CD4-positive, alpha-beta T cell (primary cell): ENCODE measurements at regions of chr2 and their contacts with region 1.

Region 1: GRCh38 chr2:58046585-58047372 is at the start of gene VRK2:
- DNase-seq: peak; percentile 68 to 93 (median 77)
- ATAC-seq: peak; percentile 91
- H3K4me3 ChIP-seq: peak within 1 kb of the TSS; percentile 75
- H3K4me3 Mint-ChIP-seq: peak within 1 kb of the TSS; percentile 91
- H3K27ac ChIP-seq: peak within 1 kb of the TSS; percentile 86 to 88
- H3K27ac Mint-ChIP-seq: peak within 1 kb of the TSS; percentile 96
- H3K4me1 ChIP-seq: peaks cover 18% of the 10 kb centered on the region
- H3K4me1 Mint-ChIP-seq: peaks cover 55% of the 10 kb centered on the region
- H3K27me3 ChIP-seq: no peaks in the 10 kb centered on the region
- H3K27me3 Mint-ChIP-seq: no peaks in the 10 kb centered on the region
- CTCF ChIP-seq: no peak
- total RNA-seq, gene VRK2: 11.1 to 11.5 TPM

Region 2: GRCh38 chr2:58063641-58064040 is 16.9 kb after region 1 on chr2:
- CTCF ChIA-PET with region 1: interaction called, 7 read pairs
- POLR2A ChIA-PET with region 1: interaction called, 5 read pairs
- intact Hi-C with region 1: loop called in 1 of 2 experiments (anchors 2 kb)
- DNase-seq: no peak
- ATAC-seq: no peak
- H3K4me3 ChIP-seq: no peak overlapping the region
- H3K4me3 Mint-ChIP-seq: peak overlapping the region; percentile 14
- H3K27ac ChIP-seq: no peak overlapping the region
- H3K27ac Mint-ChIP-seq: no peak overlapping the region
- H3K4me1 ChIP-seq: no peaks in the 10 kb centered on the region
- H3K4me1 Mint-ChIP-seq: peaks cover 48% of the 10 kb centered on the region
- H3K27me3 ChIP-seq: no peaks in the 10 kb centered on the region
- H3K27me3 Mint-ChIP-seq: no peaks in the 10 kb centered on the region
- CTCF ChIP-seq: no peak

Region 3: GRCh38 chr2:58240670-58241545 is 194.1 kb after region 1 on chr2 and contains the start of gene FANCL:
- CTCF ChIA-PET with region 1: no interaction called
- POLR2A ChIA-PET with region 1: interaction called, 3 read pairs
- intact Hi-C with region 1: loop called in 1 of 2 experiments (anchors 5 kb)
- DNase-seq: peak; percentile 15 to 77 (median 46)
- ATAC-seq: peak; percentile 83
- H3K4me3 ChIP-seq: peak within 1 kb of the TSS; percentile 92
- H3K4me3 Mint-ChIP-seq: peak within 1 kb of the TSS; percentile 94
- H3K27ac ChIP-seq: peak within 1 kb of the TSS in 1 of 2 donors; percentile 42
- H3K27ac Mint-ChIP-seq: peak within 1 kb of the TSS; percentile 70
- H3K4me1 ChIP-seq: peaks cover 4% of the 10 kb centered on the region
- H3K4me1 Mint-ChIP-seq: peaks cover 39% of the 10 kb centered on the region
- H3K27me3 ChIP-seq: no peaks in the 10 kb centered on the region
- H3K27me3 Mint-ChIP-seq: no peaks in the 10 kb centered on the region
- CTCF ChIP-seq: no peak
- total RNA-seq, gene FANCL: 4.6 to 5.5 TPM